Activated T-helper 2 cell treated with anti-CD3 and anti-CD28 coated beads, Interferon-gamma antibody, Interleukin-2, Interleukin-4, amounts not matched to agents 10 μg/mL and 5 μg/mL and 100 μg/mL, durations not matched to agents 14 hours and 24 hours and 36 hours (primary cell): ENCODE measurements at regions of chr1 and their contacts with region 1.

Region 1: GRCh38 chr1:93021539-93022134 is 57.4 kb upstream of the MTF2 start:
- DNase-seq: no peak
- H3K4me3 Mint-ChIP-seq: no peak overlapping the region
- H3K27ac Mint-ChIP-seq: no peak overlapping the region
- H3K4me1 Mint-ChIP-seq: peaks cover 12% of the 10 kb centered on the region
- H3K27me3 Mint-ChIP-seq: peaks cover 24% of the 10 kb centered on the region

Region 2: DNA sequence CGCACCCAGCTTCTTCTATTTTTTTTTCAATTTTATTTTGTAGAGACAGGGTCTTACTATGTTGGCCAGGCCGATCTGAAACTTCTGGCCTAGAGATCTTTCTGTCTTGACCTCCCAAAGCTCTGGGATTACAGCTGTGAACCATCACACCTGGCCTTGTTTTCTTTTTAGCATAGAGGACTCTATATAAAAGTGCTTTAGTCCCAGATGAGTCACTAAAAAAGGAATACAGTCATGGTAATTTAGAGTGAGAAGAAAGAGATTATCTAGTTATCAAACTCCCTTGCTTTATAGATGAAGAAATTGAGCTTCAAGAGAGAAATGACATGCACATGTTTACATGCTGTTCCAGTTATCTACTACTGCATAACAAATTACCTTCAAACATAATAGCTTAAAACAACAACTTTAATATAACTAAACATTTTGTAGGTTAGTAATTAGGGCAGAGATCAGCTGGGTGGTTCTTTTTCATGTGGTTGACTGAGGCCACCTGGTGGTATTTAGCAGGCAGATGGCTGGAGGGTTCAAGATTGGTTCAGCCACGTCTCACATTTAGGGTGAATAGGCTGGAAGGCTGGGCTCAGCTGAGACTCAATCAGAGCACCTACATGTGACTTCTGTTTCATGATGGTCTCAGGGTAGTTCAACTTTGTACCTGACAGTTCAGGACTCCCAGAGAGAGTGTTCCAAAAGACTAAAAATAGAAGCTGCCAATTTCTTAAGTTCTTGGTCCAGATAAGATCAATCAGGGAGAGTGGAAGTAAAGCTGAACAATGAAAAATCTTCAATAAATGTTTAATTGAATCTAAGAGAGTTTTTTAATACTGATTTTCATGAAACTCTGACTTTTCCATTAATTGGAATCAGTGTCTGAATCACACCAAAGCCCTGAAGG is 40.5 kb after region 1 on chr1:
- intact Hi-C with region 1: loop called (anchors 1 kb)
- DNase-seq: no peak
- H3K4me3 Mint-ChIP-seq: no peak overlapping the region
- H3K27ac Mint-ChIP-seq: no peak overlapping the region
- H3K4me1 Mint-ChIP-seq: peaks cover 5% of the 10 kb centered on the region
- H3K27me3 Mint-ChIP-seq: peaks cover 41% of the 10 kb centered on the region